ENCODE measurements at regions of chr22 and their contacts with region 1.

Region 1: GRCh38 chr22:28019881-28020871 is 101.1 kb upstream of the PITPNB start:
- DNase-seq: peak; percentile 60
- ATAC-seq: peak; percentile 95
- H3K4me3 ChIP-seq: no peak overlapping the region
- H3K27ac ChIP-seq: peak overlapping the region; percentile 21; the same call in 1 of the 2 replicates
- H3K4me1 ChIP-seq: peaks cover 13% of the 10 kb centered on the region
- H3K27me3 ChIP-seq: no peaks in the 10 kb centered on the region
- CTCF ChIP-seq: peak; percentile 89
- POLR2A ChIP-seq: no peak
- RAD21 ChIP-seq: peak; percentile 89

Region 2: DNA sequence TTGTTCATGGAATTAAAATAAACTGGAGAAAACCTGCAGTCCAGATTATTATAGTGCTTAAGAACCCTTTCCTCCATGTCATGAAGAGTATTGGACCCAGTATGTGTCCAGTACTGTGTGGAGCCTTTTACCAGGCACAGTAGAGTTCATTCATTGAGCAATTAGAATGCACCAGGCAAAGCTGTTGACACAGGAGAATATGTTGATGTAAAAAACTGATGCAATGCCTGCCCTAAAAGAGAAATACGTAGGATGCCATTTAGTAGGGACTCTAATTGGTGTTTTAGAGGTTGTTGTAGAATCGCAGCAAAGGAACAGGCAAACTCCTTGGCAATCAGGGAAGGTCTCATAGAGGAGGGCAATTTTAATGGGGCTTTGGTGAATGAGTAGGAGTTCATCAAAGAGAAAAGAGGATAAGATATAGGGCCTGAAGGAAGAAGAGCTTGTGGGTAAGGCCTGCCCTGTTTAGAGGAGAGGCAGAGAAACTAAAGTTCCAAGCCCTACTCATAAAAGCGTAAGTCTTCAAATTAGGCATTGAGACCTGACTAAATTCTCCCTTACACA is 1724.5 kb before region 1 on chr22:
- CTCF ChIA-PET with region 1: no interaction called
- POLR2A ChIA-PET with region 1: no interaction called
- dilution Hi-C with region 1: no loop called
- in situ Hi-C with region 1: no loop called
- intact Hi-C with region 1: no loop called
- DNase-seq: no peak
- ATAC-seq: no peak
- H3K4me3 ChIP-seq: no peak overlapping the region
- H3K27ac ChIP-seq: no peak overlapping the region
- H3K4me1 ChIP-seq: no peaks in the 10 kb centered on the region
- H3K27me3 ChIP-seq: no peaks in the 10 kb centered on the region
- CTCF ChIP-seq: no peak
- POLR2A ChIP-seq: no peak
- RAD21 ChIP-seq: no peak

Region 3: DNA sequence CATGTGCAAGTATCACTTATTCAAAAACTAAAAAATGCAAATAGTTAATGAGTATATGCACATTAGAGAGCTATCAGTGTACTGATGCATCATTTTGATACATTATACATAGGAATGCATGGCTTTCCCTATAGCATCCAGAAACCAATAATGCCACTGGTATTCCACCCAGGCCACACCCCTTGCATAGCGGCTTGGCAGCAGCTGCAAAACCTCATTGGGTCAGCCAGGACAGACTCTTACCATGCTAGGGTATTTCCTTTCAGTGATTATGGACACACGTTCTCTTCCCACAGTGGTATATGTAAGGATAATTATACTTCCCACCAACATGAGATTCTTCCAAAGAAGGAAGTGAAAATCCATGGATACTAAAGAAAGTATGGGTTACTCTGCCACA is 44.7 kb after region 1 on chr22:
- CTCF ChIA-PET with region 1: no interaction called
- POLR2A ChIA-PET with region 1: no interaction called
- dilution Hi-C with region 1: no loop called
- in situ Hi-C with region 1: no loop called
- intact Hi-C with region 1: no loop called
- DNase-seq: peak; percentile 24
- ATAC-seq: no peak; the same call in 1 of the 2 replicates
- H3K4me3 ChIP-seq: no peak overlapping the region
- H3K27ac ChIP-seq: no peak overlapping the region
- H3K4me1 ChIP-seq: peaks cover 2% of the 10 kb centered on the region; the same call in 1 of the 2 replicates
- H3K27me3 ChIP-seq: no peaks in the 10 kb centered on the region
- CTCF ChIP-seq: no peak
- POLR2A ChIP-seq: no peak
- RAD21 ChIP-seq: no peak

Region 4: DNA sequence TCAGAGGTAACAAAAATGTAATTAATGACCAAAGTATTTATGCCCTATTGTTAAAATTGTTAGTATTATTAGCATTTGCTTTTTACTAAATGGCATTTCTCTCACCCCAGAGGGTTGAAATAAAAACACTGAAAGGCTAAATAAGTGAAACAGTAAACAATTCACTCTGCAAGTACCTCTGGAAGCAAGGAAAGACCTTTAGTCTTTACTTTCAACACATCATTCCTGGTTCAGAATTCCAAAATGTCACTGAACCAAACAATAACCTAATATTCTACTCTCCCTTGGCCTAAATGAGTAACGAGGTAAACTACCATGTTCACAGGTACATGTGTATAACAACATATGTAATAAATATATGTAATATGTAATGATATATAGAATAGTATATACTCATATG is 290.1 kb after region 1 on chr22:
- CTCF ChIA-PET with region 1: no interaction called
- POLR2A ChIA-PET with region 1: no interaction called
- dilution Hi-C with region 1: no loop called
- in situ Hi-C with region 1: no loop called
- intact Hi-C with region 1: no loop called
- DNase-seq: no peak
- ATAC-seq: no peak
- H3K4me3 ChIP-seq: no peak overlapping the region
- H3K27ac ChIP-seq: no peak overlapping the region
- H3K4me1 ChIP-seq: no peaks in the 10 kb centered on the region
- H3K27me3 ChIP-seq: no peaks in the 10 kb centered on the region
- CTCF ChIP-seq: no peak
- POLR2A ChIP-seq: no peak
- RAD21 ChIP-seq: no peak

Region 5: GRCh38 chr22:28607795-28608194 is 587.6 kb after region 1 on chr22:
- CTCF ChIA-PET with region 1: no interaction called
- POLR2A ChIA-PET with region 1: no interaction called
- dilution Hi-C with region 1: no loop called
- in situ Hi-C with region 1: no loop called
- intact Hi-C with region 1: no loop called
- DNase-seq: peak; percentile 23
- ATAC-seq: peak; percentile 72
- H3K4me3 ChIP-seq: no peak overlapping the region
- H3K27ac ChIP-seq: peak overlapping the region; percentile 38; the same call in 1 of the 2 replicates
- H3K4me1 ChIP-seq: peaks cover 4% of the 10 kb centered on the region
- H3K27me3 ChIP-seq: no peaks in the 10 kb centered on the region
- CTCF ChIP-seq: no peak
- POLR2A ChIP-seq: no peak
- RAD21 ChIP-seq: no peak

Region 6: DNA sequence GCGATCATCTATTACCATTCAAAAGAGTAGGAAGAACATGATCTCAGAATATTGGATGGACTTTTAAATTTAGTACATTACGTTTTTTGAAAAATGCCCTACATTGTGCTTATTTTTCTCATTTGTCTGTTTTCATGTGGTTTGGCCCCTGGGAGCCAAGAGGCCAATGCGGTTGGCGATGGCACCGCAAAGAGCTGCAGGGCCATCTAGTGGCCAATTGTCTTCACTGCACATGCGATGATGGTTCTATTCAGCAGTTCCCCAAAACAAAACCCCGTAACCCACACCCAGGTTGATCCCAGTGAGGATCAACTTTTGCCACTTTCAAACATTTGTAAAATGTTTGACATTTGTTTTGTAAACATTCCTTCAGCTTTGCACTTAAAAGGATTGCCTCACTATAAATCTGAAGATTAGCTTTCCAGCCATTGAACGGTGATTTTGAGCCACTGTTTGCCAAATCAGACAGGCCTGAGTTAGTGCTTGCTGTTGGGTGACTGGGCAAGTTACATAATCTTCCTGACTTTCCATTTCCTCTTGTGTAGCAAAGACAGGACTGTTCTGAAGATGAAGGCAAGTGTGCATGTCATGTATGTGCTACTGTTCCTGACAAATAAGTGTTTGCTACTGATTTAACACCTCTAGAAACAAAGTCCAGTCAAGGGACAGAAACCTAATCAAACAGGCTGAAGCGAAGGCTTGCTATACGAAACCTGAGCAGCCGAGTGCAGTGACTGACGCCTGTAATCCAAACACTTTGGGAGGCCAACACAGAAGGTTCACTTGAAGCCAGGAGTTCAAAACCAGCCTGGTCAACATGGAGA is 809.4 kb after region 1 on chr22:
- CTCF ChIA-PET with region 1: no interaction called
- POLR2A ChIA-PET with region 1: no interaction called
- dilution Hi-C with region 1: no loop called
- in situ Hi-C with region 1: loop called (anchors 10 kb)
- intact Hi-C with region 1: no loop called
- DNase-seq: peak; percentile 73
- ATAC-seq: peak; percentile 97
- H3K4me3 ChIP-seq: no peak overlapping the region
- H3K27ac ChIP-seq: no peak overlapping the region
- H3K4me1 ChIP-seq: no peaks in the 10 kb centered on the region
- H3K27me3 ChIP-seq: no peaks in the 10 kb centered on the region
- CTCF ChIP-seq: peak; percentile 97
- POLR2A ChIP-seq: no peak; the same call in 1 of the 2 replicates
- RAD21 ChIP-seq: peak; percentile 94